K562 (cell line): ENCODE measurements at regions of chr9 and their contacts with region 1.

Region 1: DNA sequence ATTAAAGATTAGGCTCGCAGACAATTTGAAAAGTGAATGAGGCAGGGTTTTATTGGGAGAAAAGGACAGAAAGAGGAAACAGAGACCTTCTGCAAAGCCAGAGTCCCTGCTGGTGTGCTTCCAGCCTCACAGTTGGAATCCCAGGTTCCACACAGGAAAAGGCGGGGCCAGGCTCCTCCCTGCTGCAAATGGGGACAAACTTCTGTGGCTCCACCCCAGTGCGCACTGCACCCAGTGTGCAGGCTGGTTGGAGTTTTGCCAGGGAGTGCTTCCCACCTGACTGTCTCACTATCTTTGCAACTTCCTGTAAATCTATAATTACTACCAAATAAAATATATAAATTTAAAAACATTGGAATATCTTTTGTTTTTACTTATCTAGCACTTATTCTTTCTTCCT is 386.0 kb upstream of the GRIN3A start:
- DNase-seq: no peak
- ATAC-seq: no peak
- H3K4me3 ChIP-seq: no peak overlapping the region
- H3K27ac ChIP-seq: no peak overlapping the region
- H3K4me1 ChIP-seq: no peaks in the 10 kb centered on the region; a peak in 1 of 5 replicates
- H3K27me3 ChIP-seq: no peaks in the 10 kb centered on the region
- CTCF ChIP-seq: no peak
- EP300 ChIP-seq: no peak
- POLR2A ChIP-seq: no peak
- RAD21 ChIP-seq: no peak

Region 2: GRCh38 chr9:102135768-102136167 is 11.3 kb after region 1 on chr9:
- CTCF ChIA-PET with region 1: no interaction called
- POLR2A ChIA-PET with region 1: no interaction called
- in situ Hi-C with region 1: no loop called
- intact Hi-C with region 1: loop called (anchors 2 kb)
- DNase-seq: no peak
- ATAC-seq: no peak
- H3K4me3 ChIP-seq: no peak overlapping the region
- H3K27ac ChIP-seq: no peak overlapping the region
- H3K4me1 ChIP-seq: no peaks in the 10 kb centered on the region
- H3K27me3 ChIP-seq: no peaks in the 10 kb centered on the region
- CTCF ChIP-seq: no peak
- EP300 ChIP-seq: no peak
- POLR2A ChIP-seq: no peak
- RAD21 ChIP-seq: no peak

Region 3: DNA sequence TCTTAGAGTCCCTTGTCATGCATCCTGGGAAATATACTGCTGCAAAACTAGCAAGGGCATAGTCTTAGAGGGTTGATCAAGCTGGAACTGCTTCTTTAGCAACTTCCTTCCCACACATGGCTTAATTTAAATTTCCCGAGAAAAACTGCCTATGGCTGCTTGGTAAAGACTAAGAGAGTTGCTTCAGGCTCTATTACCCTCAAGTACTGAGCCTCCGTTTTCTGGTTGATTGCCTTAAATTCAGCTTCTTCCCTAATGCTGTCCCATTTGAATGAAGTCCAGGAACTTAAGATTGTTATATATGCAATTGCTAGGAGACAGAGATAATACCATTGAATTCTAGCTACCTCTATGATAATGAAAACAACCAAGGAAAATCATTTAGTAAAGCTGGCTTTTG is 485.0 kb after region 1 on chr9:
- CTCF ChIA-PET with region 1: no interaction called
- POLR2A ChIA-PET with region 1: no interaction called
- in situ Hi-C with region 1: no loop called
- intact Hi-C with region 1: no loop called
- DNase-seq: no peak
- ATAC-seq: no peak
- H3K4me3 ChIP-seq: no peak overlapping the region
- H3K27ac ChIP-seq: no peak overlapping the region
- H3K4me1 ChIP-seq: no peaks in the 10 kb centered on the region
- H3K27me3 ChIP-seq: no peaks in the 10 kb centered on the region
- CTCF ChIP-seq: no peak
- EP300 ChIP-seq: no peak
- POLR2A ChIP-seq: no peak
- RAD21 ChIP-seq: no peak